AG04450 (cell line): ENCODE measurements at regions of chr14 and their contacts with region 1.

Region 1: DNA sequence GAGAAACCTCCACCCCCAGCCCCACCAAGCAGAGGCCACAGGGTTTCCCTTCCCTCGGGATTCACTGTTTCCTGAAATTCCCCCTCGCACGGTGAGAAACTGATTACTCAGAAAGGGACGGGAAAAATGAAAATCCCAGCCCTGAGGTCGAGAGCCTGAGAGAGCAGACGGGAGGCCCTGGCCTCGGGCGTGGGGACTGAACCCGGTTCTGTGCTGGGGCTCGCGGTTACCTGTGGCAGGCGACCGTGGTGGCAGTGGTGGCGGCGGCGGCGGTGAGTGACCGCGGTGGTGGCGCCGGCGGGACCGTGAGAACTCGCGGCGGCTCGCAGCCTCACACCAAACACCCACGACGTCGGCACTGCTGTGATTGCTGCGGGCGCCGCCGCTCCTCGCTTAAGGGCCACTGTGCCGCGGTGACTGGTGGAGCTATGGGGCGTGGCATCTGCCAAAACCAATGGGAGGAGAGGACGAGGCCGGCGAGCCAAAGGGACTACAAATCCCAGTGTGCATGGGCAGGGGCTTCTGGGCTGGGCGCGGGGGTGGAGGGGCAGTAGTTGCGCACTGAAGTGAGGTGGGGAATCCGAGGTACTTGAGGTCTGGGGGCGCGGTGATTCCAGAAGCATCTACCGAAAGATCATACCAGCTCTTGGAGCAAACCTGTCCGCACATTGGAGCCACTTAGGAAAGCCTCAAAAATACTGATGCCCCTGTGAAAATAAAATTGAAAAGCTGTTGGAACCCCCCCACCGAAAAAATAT is at the start of gene LGMN:
- DNase-seq: peak; percentile 66
- H3K4me3 ChIP-seq: peak within 1 kb of the TSS; percentile 69
- H3K27ac ChIP-seq: no peak within 1 kb of the TSS
- H3K27me3 ChIP-seq: peaks cover 8% of the 10 kb centered on the region
- CTCF ChIP-seq: no peak
- polyA plus RNA-seq, gene LGMN: 21.8 and 23.4 TPM in 2 replicates

Region 2: GRCh38 chr14:92729626-92730358 is 18.6 kb before region 1 on chr14:
- CTCF ChIA-PET with region 1: no interaction called
- POLR2A ChIA-PET with region 1: interaction called, 12 read pairs
- DNase-seq: peak; percentile 89
- H3K4me3 ChIP-seq: no peak overlapping the region
- H3K27ac ChIP-seq: no peak overlapping the region
- H3K27me3 ChIP-seq: peaks cover 13% of the 10 kb centered on the region
- CTCF ChIP-seq: no peak